GM18951 (cell line): ENCODE measurements at regions of chr2 and their contacts with region 1.

Region 1: DNA sequence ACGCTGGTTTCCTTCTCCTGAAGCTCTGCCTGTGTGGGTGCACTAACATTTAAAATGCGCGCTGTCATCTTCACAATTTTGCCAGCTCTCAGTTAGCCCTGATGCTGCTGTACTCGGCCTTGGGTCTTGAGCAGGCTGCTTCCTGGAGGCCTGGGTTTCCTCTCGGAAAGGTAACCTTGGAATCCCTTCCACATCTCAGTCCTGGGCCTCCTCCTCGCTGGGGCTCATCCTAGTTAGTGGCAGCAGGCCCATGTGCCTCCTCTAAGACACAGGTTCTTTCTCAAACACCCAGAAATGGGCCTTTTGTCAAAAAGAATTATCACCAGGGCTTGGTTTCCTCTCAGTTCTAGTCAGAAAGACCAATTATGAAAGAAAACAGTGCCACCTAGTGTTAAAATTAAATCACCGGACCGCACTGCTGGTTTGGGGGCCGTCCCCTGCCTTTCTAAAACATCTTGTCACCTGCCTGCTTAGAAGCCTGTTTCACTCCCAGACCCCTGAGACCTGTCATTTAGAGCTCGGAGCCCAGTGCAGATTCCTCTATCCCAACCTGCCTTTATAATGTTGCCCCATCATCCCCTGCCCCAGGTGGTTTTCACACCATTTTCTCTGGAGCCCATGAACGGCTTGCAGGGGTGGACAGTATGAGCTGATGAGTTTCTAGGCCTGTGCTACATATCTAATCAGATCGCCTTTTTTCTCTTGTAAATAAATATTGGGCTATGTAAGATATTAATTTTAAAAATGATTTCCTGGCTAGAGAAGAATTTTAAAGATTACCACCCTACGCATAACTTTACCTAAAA is 42.4 kb downstream of the HK2 start:
- POLR2A ChIP-seq: no peak

Region 2: DNA sequence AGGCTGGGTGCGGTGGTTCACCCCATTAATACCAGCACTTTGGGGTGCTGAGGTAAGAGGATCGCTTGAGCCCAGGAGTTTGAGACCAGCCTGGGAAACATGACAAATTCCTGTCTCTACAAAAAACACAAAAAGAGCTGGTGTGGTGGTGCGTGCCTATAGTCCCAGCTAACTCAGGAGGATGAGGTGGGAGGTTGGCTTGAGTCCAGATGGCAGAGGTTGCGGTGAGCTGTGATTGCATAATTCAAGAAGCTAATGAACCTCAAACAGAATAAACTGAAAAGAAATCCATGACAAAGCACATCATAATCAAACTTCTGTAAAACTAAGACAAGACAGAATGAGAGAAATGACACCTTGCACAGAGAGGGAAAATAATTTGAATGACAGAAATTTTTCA is 167.4 kb before region 1 on chr2:
- in situ Hi-C with region 1: loop called (anchors 10 kb)
- POLR2A ChIP-seq: no peak